ENCODE measurements at regions of chr2 and their contacts with region 1.

Region 1: DNA sequence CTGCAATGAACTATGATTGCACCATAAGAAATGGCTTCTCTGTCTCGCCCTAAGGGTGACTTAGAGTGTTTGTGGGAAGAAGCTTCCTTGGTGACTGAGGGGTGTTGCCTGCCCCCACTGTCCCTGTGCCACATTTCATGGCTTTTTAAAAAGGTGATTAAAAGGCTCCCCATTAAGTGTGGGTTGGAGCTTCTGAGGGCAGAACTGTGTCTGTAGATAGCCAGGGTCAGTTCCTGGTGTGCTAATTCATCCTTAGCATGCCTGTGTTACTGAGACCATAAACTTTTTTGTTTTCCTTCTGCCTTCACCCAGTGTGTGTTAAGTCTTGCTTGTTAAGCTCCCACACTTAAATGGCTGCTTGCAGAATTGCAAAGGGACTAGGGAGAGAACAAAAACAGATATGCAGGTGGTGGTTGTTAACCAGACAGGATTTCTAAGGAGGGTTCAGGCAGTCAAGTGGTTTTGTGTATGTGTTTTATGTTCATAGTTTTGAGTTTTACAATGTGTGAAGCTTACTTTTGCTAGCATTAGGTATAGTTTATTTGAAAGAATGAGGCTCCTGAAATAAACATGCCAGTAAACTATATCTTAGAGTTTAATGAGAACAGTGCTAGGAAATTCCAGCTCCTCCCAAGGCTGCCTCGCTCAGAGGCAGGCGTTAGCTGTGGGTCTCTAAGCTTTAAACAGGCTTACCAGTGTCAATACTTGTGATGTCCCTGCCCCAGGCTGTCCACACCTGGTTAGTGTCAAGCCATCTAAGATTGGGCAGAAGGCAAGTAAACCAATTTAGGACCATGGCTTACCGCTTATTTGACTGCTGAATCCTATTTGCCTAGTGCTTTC is 14.5 kb downstream of the CERS6 start:
- DNase-seq: no peak
- ATAC-seq: peak; percentile 14
- H3K4me3 Mint-ChIP-seq: no peak overlapping the region
- H3K27ac Mint-ChIP-seq: no peak overlapping the region
- H3K4me1 Mint-ChIP-seq: peaks cover 55% of the 10 kb centered on the region
- H3K27me3 Mint-ChIP-seq: no peaks in the 10 kb centered on the region
- CTCF ChIP-seq: no peak

Region 2: GRCh38 chr2:167005096-167005495 is 1465.4 kb before region 1 on chr2:
- CTCF ChIA-PET with region 1: no interaction called
- POLR2A ChIA-PET with region 1: no interaction called
- intact Hi-C with region 1: loop called (anchors 10 kb)
- DNase-seq: no peak
- ATAC-seq: no peak
- H3K4me3 Mint-ChIP-seq: no peak overlapping the region
- H3K27ac Mint-ChIP-seq: no peak overlapping the region
- H3K4me1 Mint-ChIP-seq: no peaks in the 10 kb centered on the region
- H3K27me3 Mint-ChIP-seq: no peaks in the 10 kb centered on the region
- CTCF ChIP-seq: no peak

Region 3: GRCh38 chr2:168530982-168531622 is 60.6 kb after region 1 on chr2:
- CTCF ChIA-PET with region 1: no interaction called
- POLR2A ChIA-PET with region 1: no interaction called
- intact Hi-C with region 1: loop called (anchors 5 kb)
- DNase-seq: no peak
- ATAC-seq: peak; percentile 61
- H3K4me3 Mint-ChIP-seq: peak overlapping the region; percentile 65
- H3K27ac Mint-ChIP-seq: peak overlapping the region; percentile 82
- H3K4me1 Mint-ChIP-seq: peaks cover 67% of the 10 kb centered on the region
- H3K27me3 Mint-ChIP-seq: no peaks in the 10 kb centered on the region
- CTCF ChIP-seq: no peak

Measured in activated B cell treated with CpG ODN at 0.5 μM for 24 hours (primary cell).